ENCODE measurements at regions of chr5 and their contacts with region 1.

Region 1: GRCh38 chr5:140718241-140718580 is 18.0 kb downstream of the ZMAT2 start:
- DNase-seq: no peak
- H3K4me3 Mint-ChIP-seq: peak overlapping the region; percentile 84
- H3K27ac Mint-ChIP-seq: peak overlapping the region; percentile 99
- H3K4me1 Mint-ChIP-seq: peaks cover 27% of the 10 kb centered on the region
- H3K27me3 Mint-ChIP-seq: no peaks in the 10 kb centered on the region
- CTCF ChIP-seq: no peak

Region 2: GRCh38 chr5:140084541-140084940 is 633.7 kb before region 1 on chr5:
- CTCF ChIA-PET with region 1: no interaction called
- intact Hi-C with region 1: no loop called
- DNase-seq: no peak
- H3K4me3 Mint-ChIP-seq: no peak overlapping the region
- H3K27ac Mint-ChIP-seq: no peak overlapping the region
- H3K4me1 Mint-ChIP-seq: peaks cover 13% of the 10 kb centered on the region
- H3K27me3 Mint-ChIP-seq: peaks cover 33% of the 10 kb centered on the region
- CTCF ChIP-seq: no peak

Region 3: GRCh38 chr5:140287801-140288521 is 430.2 kb before region 1 on chr5:
- CTCF ChIA-PET with region 1: no interaction called
- intact Hi-C with region 1: no loop called
- DNase-seq: no peak
- H3K4me3 Mint-ChIP-seq: no peak overlapping the region
- H3K27ac Mint-ChIP-seq: no peak overlapping the region
- H3K4me1 Mint-ChIP-seq: peaks cover 27% of the 10 kb centered on the region
- H3K27me3 Mint-ChIP-seq: no peaks in the 10 kb centered on the region
- CTCF ChIP-seq: no peak

Region 4: DNA sequence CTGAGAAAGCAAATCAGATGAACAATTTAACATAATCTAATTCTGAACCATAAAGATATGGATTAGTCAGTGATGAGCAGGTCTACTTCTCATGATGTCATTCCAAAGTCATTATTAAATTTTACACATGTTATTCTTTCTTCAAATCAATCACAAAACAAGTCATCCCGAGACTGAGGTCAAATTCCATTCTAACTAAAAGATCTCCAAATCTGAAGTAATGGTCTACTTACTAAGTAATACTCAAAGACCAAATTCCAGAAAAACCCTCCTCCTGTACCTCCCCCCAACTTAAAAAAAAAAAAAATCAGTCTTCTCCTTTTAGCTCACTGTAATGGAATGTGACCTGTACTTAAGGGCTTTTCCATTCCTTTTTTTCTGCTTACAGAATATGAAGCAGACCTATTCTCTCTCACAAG is 420.0 kb before region 1 on chr5:
- CTCF ChIA-PET with region 1: no interaction called
- intact Hi-C with region 1: no loop called
- DNase-seq: no peak
- H3K4me3 Mint-ChIP-seq: no peak overlapping the region
- H3K27ac Mint-ChIP-seq: no peak overlapping the region
- H3K4me1 Mint-ChIP-seq: peaks cover 60% of the 10 kb centered on the region
- H3K27me3 Mint-ChIP-seq: no peaks in the 10 kb centered on the region
- CTCF ChIP-seq: no peak

Region 5: GRCh38 chr5:140372971-140373487 is 345.2 kb before region 1 on chr5:
- CTCF ChIA-PET with region 1: interaction called, 6 read pairs
- intact Hi-C with region 1: loop called (anchors 5 kb)
- DNase-seq: peak; percentile 79
- H3K4me3 Mint-ChIP-seq: no peak overlapping the region
- H3K27ac Mint-ChIP-seq: peak overlapping the region; percentile 31
- H3K4me1 Mint-ChIP-seq: peaks cover 18% of the 10 kb centered on the region
- H3K27me3 Mint-ChIP-seq: no peaks in the 10 kb centered on the region
- CTCF ChIP-seq: peak; percentile 90

Region 6: GRCh38 chr5:140664359-140665119 is 53.7 kb before region 1 on chr5 and contains the start of gene WDR55:
- CTCF ChIA-PET with region 1: interaction called, 3 read pairs
- intact Hi-C with region 1: loop called (anchors 2 kb)
- DNase-seq: peak; percentile 98
- H3K4me3 Mint-ChIP-seq: peak within 1 kb of the TSS; percentile 100
- H3K27ac Mint-ChIP-seq: peak within 1 kb of the TSS; percentile 91
- H3K4me1 Mint-ChIP-seq: peaks cover 23% of the 10 kb centered on the region
- H3K27me3 Mint-ChIP-seq: no peaks in the 10 kb centered on the region
- CTCF ChIP-seq: no peak
- total RNA-seq, gene WDR55: 54.2 and 59.8 TPM in 2 replicates

Region 7: DNA sequence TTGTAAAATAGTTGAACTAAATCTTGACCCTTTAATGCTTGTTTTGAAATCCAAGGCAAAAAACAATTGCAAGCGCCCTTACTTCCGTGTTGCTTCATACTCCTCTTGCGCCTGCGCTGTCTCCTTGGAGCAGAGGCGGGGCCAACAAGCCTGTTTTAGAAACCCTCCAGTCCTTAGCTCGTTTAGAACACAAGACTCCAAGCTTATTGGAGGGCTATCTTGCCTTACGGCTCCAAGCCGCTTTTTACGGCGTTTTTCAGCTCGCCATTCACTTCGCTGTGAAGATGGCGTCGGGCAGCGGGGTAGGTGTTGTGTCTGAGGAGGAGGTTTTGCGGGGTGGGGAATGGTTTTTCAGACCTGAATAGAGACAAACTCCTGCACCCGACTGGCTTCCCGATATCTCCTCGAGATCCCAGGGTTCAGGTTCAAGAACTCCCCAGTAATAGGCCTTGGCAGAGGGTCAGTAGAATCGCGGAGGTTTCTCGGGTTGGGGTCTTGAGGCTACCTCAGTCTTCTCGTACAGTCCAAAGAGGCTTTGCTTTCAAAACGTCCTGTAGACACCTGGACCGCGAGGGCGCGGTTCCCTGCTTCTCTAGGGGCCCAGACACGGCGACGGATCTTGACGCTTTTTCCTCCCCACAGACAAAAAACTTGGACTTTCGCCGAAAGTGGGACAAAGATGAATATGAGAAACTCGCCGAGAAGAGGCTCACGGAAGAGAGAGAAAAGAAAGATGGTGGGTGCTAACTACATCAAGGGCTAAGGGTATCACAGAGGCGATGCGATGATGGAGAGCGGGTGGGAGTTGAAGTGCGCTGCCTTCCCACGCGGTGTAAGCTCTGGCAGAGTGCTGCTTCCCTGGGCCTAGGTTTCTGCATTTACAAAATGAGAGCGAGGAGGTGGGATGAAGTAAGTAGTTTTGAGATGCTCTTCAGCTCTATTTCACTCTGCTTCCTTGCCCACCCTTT is 17.8 kb before region 1 on chr5 and contains the start of gene ZMAT2:
- CTCF ChIA-PET with region 1: interaction called, 12 read pairs
- intact Hi-C with region 1: loop called (anchors 1 kb)
- DNase-seq: peak; percentile 94
- H3K4me3 Mint-ChIP-seq: peak within 1 kb of the TSS; percentile 88
- H3K27ac Mint-ChIP-seq: peak within 1 kb of the TSS; percentile 95
- H3K4me1 Mint-ChIP-seq: peaks cover 24% of the 10 kb centered on the region
- H3K27me3 Mint-ChIP-seq: no peaks in the 10 kb centered on the region
- CTCF ChIP-seq: no peak
- total RNA-seq, gene ZMAT2: 75.9 and 83.3 TPM in 2 replicates

Region 8: GRCh38 chr5:140821375-140822280 is 103.4 kb after region 1 on chr5 and contains the start of gene PCDHA5:
- CTCF ChIA-PET with region 1: no interaction called
- intact Hi-C with region 1: no loop called
- DNase-seq: no peak
- H3K4me3 Mint-ChIP-seq: no peak within 1 kb of the TSS
- H3K27ac Mint-ChIP-seq: no peak within 1 kb of the TSS
- H3K4me1 Mint-ChIP-seq: no peaks in the 10 kb centered on the region
- H3K27me3 Mint-ChIP-seq: no peaks in the 10 kb centered on the region
- CTCF ChIP-seq: no peak
- total RNA-seq, gene PCDHA5: 0.81 and 1.5 TPM in 2 replicates